WTC11 (cell line): ENCODE measurements at regions of chr1 and their contacts with region 1.

Region 1: GRCh38 chr1:160768295-160768657 is 27.7 kb upstream of the LY9 start:
- DNase-seq: peak; percentile 71
- ATAC-seq: peak; percentile 89
- H3K4me3 Mint-ChIP-seq: no peak overlapping the region
- H3K27ac Mint-ChIP-seq: no peak overlapping the region
- H3K4me1 Mint-ChIP-seq: peaks cover 6% of the 10 kb centered on the region
- H3K27me3 Mint-ChIP-seq: peaks cover 3% of the 10 kb centered on the region; the same call in 1 of the 2 replicates
- CTCF ChIP-seq: peak; percentile 30; the same call in 1 of the 2 replicates

Region 2: GRCh38 chr1:160726498-160727315 is 41.6 kb before region 1 on chr1:
- CTCF ChIA-PET with region 1: interaction called, 47 read pairs
- POLR2A ChIA-PET with region 1: no interaction called
- DNase-seq: peak; percentile 69
- ATAC-seq: peak; percentile 86
- H3K4me3 Mint-ChIP-seq: no peak overlapping the region
- H3K27ac Mint-ChIP-seq: no peak overlapping the region
- H3K4me1 Mint-ChIP-seq: peaks cover 23% of the 10 kb centered on the region
- H3K27me3 Mint-ChIP-seq: no peaks in the 10 kb centered on the region; the same call in 1 of the 2 replicates
- CTCF ChIP-seq: peak; percentile 78

Region 3: GRCh38 chr1:161054805-161055204 is 286.5 kb after region 1 on chr1:
- CTCF ChIA-PET with region 1: no interaction called
- POLR2A ChIA-PET with region 1: no interaction called
- DNase-seq: no peak
- ATAC-seq: no peak
- H3K4me3 Mint-ChIP-seq: no peak overlapping the region
- H3K27ac Mint-ChIP-seq: no peak overlapping the region
- H3K4me1 Mint-ChIP-seq: no peaks in the 10 kb centered on the region
- H3K27me3 Mint-ChIP-seq: peaks cover 10% of the 10 kb centered on the region
- CTCF ChIP-seq: 0 out of 2 replicates have a peak, but pooled peaks have one; percentile 17